Psoas muscle (tissue), 8 donors: ENCODE measurements at regions of chr3 and their contacts with region 1.

Region 1: DNA sequence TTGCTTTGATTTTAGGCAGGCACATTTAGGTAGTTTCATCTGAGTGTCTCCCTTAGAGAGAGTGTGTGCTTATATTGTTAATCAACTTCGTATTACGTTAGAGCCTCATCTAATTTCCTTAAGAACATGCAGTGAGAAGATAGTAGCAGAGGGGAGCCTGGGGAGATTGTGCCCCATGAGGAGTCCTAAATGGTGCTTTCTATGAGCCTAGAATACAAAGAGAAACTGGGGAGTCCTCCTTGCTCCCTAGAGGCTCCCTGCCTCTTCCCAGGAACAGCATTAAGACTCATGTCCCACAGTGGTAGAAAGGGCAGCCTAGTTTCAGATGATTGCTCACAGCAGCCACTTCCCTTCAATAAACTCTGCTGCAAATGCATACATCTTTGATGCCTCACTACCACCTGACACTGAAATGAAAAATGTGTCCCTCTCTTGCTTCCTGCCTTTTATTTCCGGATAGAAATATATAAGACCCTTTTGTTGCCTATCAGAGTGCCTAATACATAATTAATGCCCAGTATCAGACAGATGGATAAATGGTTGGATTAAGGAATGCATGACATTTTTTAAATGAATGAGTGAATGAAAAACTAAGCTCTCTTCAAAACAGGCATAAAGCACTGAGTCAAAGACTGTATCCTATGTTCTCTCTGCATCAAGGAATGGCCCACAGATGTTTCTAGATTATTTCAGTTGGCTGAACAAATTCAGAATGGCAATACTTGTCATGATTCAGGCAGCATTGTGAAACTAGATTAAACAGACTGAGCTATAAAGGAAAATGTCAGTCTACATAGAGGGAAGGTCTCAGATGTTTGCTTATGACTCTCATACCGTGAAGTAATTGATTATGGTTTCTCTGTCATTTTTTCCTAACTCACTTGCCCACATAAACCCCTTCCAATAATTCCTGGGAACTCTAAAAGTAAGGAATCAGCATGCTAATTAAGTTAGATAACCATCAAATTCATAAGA is 362.1 kb downstream of the LRRC3B start:
- DNase-seq: no peak
- ATAC-seq: no peak
- H3K4me3 ChIP-seq: no peak overlapping the region
- H3K27ac ChIP-seq: no peak overlapping the region
- H3K4me1 ChIP-seq: no peaks in the 10 kb centered on the region
- H3K27me3 ChIP-seq: no peaks in the 10 kb centered on the region
- CTCF ChIP-seq: no peak

Region 2: GRCh38 chr3:25229586-25229985 is 1755.1 kb before region 1 on chr3:
- intact Hi-C with region 1: loop called in 1 of 2 experiments (anchors 5 kb)
- DNase-seq: no peak
- ATAC-seq: no peak
- H3K4me3 ChIP-seq: no peak overlapping the region
- H3K27ac ChIP-seq: no peak overlapping the region
- H3K4me1 ChIP-seq: no peaks in the 10 kb centered on the region
- H3K27me3 ChIP-seq: no peaks in the 10 kb centered on the region
- CTCF ChIP-seq: no peak

Region 3: GRCh38 chr3:26515351-26515750 is 469.4 kb before region 1 on chr3:
- intact Hi-C with region 1: no loop called
- DNase-seq: no peak
- ATAC-seq: no peak
- H3K4me3 ChIP-seq: no peak overlapping the region
- H3K27ac ChIP-seq: no peak overlapping the region
- H3K4me1 ChIP-seq: no peaks in the 10 kb centered on the region
- H3K27me3 ChIP-seq: no peaks in the 10 kb centered on the region
- CTCF ChIP-seq: no peak

Region 4: GRCh38 chr3:26931896-26932295 is 52.8 kb before region 1 on chr3:
- intact Hi-C with region 1: no loop called
- DNase-seq: no peak
- ATAC-seq: no peak
- H3K4me3 ChIP-seq: no peak overlapping the region
- H3K27ac ChIP-seq: no peak overlapping the region
- H3K4me1 ChIP-seq: no peaks in the 10 kb centered on the region
- H3K27me3 ChIP-seq: no peaks in the 10 kb centered on the region
- CTCF ChIP-seq: no peak